ENCODE measurements at regions of chr19 and their contacts with region 1.

Region 1: GRCh38 chr19:10695401-10696398 is 5.5 kb upstream of the QTRT1 start:
- DNase-seq: peak; percentile 95

Region 2: DNA sequence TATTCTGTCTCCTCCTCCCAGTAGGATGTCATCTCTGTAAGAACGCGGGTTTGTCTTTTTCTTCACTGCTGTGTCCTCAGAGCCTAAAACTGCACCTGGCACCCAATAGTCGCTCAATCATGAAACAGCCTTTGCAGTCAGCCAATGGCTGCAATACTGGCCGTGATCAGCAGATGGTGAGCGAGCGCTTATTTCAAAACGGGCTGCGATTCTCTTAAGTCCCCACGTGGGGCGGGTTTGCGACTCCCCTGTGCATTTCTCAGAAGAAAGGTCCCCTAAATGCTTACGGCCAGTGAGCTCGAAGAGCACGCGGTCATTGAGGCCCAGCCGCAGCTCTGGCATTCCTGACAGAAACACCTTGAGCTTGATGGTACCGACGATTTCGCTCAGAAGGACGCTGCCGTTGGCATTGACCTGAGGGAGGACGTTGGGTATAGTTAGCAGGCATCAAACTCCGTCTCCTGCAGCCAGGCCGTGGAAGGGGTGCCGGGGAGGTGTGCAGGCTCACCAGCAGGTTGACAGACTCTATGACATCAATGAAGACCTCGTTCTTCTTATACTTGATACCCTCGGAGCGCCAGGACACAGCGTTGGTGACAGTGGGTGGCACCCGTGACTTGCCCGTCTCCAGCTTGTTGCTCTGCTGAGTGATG is 114.6 kb before region 1 on chr19:
- intact Hi-C with region 1: loop called (anchors 5 kb)
- DNase-seq: peak; percentile 92

Region 3: DNA sequence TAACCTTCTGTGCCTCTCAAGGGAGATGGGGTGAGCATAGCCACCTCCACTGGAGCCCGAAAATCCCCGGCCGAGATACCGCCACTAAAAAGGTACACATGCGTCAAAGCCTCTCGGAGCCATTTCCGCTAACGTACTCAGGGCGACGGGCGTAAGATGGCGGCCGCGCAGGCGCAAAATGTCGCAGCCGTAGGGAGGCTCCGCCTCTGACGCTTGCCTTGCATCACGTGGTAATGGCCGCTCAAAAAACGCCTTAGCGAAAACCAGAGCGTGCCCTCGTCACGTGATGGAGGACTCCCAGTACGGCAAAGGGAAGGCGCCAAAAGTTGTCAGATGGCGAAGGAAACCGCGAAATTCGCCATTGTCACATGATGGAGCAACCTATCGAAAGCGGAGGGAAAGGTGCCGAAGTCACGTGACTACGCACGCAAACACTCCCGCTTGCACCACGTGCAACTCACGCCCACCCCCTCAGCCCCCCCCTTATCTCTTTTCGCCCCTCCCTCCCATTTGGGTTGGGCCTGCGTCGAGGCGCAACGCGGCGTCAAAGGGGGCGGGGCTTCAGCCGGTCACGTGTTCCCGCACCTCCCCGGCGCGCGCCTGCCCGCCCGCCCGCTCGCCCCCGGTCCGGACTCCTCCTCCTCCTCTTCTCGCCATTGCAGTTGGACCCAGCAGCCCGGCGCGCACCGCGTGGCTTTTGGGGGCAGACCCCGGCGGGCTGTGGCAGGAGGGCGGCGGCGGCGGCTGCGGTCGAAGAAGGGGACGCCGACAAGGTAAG is 41.8 kb before region 1 on chr19 and contains the start of gene ILF3:
- intact Hi-C with region 1: loop called (anchors 5 kb)
- DNase-seq: peak; percentile 99
- total RNA-seq, gene ILF3: 115 TPM

Region 4: DNA sequence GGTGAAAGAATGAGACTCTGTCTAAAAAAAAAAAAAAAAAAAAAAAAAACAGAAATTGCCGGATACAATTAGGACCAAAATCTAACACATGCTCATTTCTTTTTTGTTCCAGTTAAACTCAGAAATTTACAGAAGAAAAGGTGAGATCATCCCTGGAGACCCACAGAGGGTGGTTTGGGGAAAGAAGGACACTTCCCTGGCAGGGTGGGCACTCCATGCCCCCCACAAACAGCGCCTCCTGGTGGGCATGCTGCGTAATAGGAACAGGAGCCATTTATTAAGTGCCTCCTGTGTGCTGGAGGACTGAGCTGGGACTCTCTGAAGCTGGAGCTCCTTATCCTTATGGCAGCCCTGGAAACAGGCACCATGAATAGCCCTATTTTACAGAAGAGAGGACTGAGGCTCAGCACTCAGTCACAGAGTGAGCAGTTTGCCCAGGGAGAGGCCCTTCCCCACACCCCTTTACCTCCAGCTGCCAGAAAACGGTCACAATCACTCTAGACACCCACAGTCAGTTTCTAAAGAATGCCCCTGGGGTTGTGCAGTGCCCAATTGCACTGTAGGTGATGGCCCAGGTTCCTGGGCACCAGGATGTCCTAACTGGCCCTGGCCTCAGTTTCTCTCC is 162.6 kb after region 1 on chr19:
- intact Hi-C with region 1: no loop called
- DNase-seq: no peak

Measured in cardiac septum (tissue), 1 donor.